K562 (cell line): ENCODE measurements at regions of chr17 and their contacts with region 1.

Region 1: GRCh38 chr17:57552114-57552624 is 192.9 kb downstream of the CCDC182 start:
- DNase-seq: peak; percentile 58 to 68 (median 65)
- ATAC-seq: peak; percentile 83
- H3K4me3 ChIP-seq: no peak overlapping the region
- H3K27ac ChIP-seq: no peak overlapping the region
- H3K4me1 ChIP-seq: peaks cover 29% of the 10 kb centered on the region in 2 experiments; a peak in 4 of 5 replicates
- H3K27me3 ChIP-seq: no peaks in the 10 kb centered on the region
- CTCF ChIP-seq: peak; percentile 62 to 87 (median 70)
- EP300 ChIP-seq: no peak
- POLR2A ChIP-seq: no peak
- RAD21 ChIP-seq: peak in 1 of 2 experiments; percentile 41; a peak in 2 of 4 replicates

Region 2: DNA sequence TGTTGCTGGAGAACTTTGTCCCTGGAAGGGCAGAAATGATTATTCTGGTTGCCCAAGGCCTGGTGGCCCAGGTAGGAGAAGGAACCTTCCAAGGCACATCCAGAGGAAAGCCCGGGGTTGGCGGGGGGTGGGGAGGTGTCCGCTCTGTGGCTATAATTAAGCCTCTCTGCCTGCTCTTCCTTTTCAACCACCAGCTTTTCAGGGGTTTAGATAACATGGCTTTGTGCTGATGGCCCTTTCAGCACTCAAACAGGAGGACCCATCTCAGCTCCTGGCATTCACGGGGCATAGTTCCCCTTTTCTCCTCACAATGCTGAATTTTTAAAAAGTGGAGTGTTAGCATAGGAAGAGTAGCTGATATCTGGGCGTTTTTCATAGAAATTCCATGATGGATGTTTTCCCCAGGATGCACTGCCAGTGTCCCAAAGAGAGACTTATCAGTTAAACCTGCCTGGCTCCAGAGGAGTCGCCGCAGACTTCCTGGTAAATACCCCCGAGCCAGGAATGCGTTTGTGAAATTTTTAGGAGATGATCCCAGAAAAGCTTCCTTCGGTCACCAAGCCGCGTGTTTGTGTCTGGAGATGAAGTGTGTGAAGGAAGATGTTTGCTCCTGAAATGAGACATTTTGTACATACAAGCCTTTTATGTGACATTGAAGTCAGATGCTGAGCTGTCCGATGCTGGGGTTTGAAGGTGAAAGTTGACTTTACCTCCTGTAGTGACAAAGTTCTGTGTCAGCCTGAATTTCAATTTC is 107.3 kb before region 1 on chr17:
- CTCF ChIA-PET with region 1: no interaction called
- POLR2A ChIA-PET with region 1: no interaction called
- in situ Hi-C with region 1: no loop called
- intact Hi-C with region 1: no loop called
- DNase-seq: no peak
- ATAC-seq: no peak
- H3K4me3 ChIP-seq: no peak overlapping the region
- H3K27ac ChIP-seq: no peak overlapping the region
- H3K4me1 ChIP-seq: peaks cover 27 to 28% of the 10 kb centered on the region in 2 experiments
- H3K27me3 ChIP-seq: no peaks in the 10 kb centered on the region
- CTCF ChIP-seq: no peak
- EP300 ChIP-seq: no peak
- POLR2A ChIP-seq: no peak
- RAD21 ChIP-seq: no peak

Region 3: DNA sequence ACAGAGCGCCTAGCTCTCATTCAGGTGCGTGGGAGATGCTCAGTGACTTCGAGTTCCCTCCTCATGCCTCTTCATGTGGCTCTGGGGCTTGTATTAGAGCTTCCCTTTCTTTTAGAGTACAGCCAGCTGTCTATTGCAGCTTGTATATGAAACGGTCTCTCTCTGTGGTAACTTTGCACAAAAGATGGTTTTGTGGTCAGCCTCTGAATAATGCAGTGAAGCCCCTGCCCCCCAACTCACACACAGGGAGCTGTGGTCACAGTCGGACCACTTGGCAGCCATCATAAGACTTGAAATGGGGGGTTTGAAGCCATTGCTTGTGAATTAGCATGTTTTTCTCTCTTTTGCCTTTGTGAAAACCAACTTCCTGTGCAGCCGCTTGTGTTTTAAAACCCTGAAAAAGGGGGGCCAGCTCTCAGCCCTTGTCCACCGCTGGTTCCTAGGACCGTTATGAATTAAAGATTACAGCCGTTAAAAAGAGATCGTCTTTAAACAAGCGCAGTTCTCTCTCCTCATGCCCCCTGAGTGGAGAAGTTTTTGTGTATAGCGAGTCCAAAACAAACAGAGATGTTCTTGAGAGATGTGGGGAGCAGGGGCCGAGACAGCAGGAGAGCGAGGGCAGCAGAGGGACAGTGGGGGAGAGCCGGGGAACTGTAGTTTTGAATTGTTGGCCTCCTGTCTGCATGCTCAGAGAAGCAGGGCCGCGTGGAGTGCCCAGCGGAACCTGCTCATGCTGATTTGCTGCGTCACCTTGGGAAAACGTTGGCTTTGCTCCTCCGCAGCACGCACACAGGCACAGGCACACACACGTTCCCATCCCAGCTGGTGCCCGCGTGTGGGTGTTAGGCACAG is 96.9 kb before region 1 on chr17:
- CTCF ChIA-PET with region 1: no interaction called
- POLR2A ChIA-PET with region 1: no interaction called
- in situ Hi-C with region 1: no loop called
- intact Hi-C with region 1: loop called (anchors 2 kb)
- DNase-seq: no peak
- ATAC-seq: no peak
- H3K4me3 ChIP-seq: no peak overlapping the region
- H3K27ac ChIP-seq: no peak overlapping the region
- H3K4me1 ChIP-seq: peaks cover 8 to 13% of the 10 kb centered on the region in 2 experiments; a peak in 4 of 5 replicates
- H3K27me3 ChIP-seq: no peaks in the 10 kb centered on the region
- CTCF ChIP-seq: no peak
- EP300 ChIP-seq: no peak
- POLR2A ChIP-seq: no peak
- RAD21 ChIP-seq: no peak

Region 4: DNA sequence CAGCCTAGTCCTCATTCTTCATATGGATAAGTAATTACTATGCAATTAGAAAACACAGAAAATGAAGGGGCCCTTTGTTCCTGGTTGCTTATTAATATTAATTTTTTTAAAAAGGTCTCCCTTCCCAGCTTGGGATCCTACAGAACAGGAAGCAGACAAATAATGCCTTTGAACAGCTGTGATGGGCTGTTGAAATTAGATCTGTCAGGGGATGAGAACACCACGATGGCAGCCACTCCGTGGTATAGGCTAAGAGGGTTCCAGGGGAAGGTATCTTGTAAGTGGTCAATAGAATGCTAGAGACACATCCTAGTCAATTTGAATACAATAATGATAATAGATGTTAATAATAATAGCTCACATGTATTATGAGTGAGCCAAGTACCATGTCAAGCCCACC is 109.9 kb after region 1 on chr17:
- CTCF ChIA-PET with region 1: no interaction called
- POLR2A ChIA-PET with region 1: no interaction called
- in situ Hi-C with region 1: no loop called
- intact Hi-C with region 1: no loop called
- DNase-seq: no peak
- ATAC-seq: no peak
- H3K4me3 ChIP-seq: no peak overlapping the region
- H3K27ac ChIP-seq: no peak overlapping the region
- H3K4me1 ChIP-seq: peaks cover 4 to 9% of the 10 kb centered on the region in 2 experiments; a peak in 3 of 5 replicates
- H3K27me3 ChIP-seq: no peaks in the 10 kb centered on the region
- CTCF ChIP-seq: no peak
- EP300 ChIP-seq: no peak
- POLR2A ChIP-seq: no peak
- RAD21 ChIP-seq: no peak